ENCODE measurements at regions of chr6 and their contacts with region 1.

Region 1: DNA sequence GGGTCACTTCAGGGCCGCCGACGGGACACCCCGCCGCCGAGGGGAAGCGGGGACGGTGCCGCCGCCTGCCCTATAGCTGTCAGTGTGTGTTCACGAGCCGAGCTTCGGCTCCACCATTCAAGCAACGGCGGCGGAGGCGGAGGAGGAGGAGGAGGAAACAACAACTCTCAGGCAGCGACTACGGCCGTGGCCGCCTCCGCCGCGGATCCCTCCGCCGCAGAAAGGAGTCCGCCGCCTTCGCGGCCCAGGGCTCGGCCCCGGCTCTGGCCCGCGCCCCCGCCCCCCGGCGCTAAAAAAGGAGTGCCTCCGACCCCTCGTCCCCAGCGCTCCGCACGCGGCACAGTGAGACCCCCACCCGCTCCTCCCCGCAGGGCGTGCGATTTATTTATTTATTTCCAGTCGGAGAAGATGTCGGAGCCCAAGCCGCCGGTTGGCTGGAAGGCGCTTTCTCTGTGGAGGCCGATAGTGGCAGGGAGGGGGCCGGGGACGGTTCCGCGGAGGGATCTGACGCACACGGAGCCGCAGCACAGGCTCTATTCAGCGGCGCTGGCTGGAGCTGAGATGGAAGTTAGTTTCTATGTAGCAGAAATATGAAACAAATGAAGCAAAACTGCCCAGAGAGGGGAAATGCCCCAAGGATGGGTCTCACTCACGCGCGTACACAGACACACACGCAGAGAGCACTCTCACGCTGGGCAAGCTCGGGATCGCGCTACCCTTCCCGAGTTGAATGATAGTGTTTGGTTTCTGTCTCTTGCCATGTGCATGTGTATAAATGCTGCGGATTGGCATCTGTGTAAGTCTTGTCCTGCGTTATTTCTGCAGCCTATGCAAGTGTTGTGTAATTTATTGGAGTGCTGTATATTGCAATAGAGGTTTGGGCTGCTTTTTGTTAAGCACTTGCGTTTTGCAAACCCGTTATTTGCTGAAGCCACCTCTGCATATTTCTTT is at the start of gene PHIP:
- DNase-seq: peak; percentile 96
- H3K4me3 ChIP-seq: peak within 1 kb of the TSS; percentile 68 to 98 (median 86)
- H3K27ac ChIP-seq: peak within 1 kb of the TSS; percentile 80
- H3K4me1 ChIP-seq: peaks cover 10% of the 10 kb centered on the region
- H3K27me3 ChIP-seq: no peaks in the 10 kb centered on the region
- CTCF ChIP-seq: no peak
- total RNA-seq, gene PHIP: 17.2 to 18.0 TPM

Region 2: DNA sequence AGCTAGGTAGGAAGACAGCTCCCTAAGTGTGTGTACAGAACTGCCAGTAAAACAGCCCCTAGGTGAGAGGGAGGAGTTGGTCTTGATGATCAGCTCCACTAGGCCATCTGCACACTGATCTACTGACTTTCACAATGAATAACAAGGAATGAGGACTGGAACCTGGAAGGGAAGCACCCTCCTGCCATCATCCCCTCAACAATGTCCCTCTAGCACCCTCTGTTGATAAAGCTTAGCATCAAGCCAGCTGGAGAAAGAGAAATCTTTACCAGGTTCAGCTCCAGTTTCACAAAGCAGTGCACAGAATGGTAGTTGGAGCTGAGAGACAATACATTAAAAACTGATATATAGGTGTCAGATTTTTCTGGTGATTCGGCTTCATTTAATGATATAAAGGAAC is 268.2 kb before region 1 on chr6:
- CTCF ChIA-PET with region 1: no interaction called
- dilution Hi-C with region 1: no loop called
- in situ Hi-C with region 1: no loop called
- intact Hi-C with region 1: loop called (anchors 5 kb)
- DNase-seq: peak; percentile 77
- H3K4me3 ChIP-seq: no peak overlapping the region
- H3K27ac ChIP-seq: peak overlapping the region; percentile 85
- H3K4me1 ChIP-seq: peaks cover 23% of the 10 kb centered on the region
- H3K27me3 ChIP-seq: no peaks in the 10 kb centered on the region
- CTCF ChIP-seq: peak; percentile 76 to 80

Region 3: GRCh38 chr6:79158856-79159516 is 80.6 kb after region 1 on chr6:
- CTCF ChIA-PET with region 1: no interaction called
- dilution Hi-C with region 1: no loop called
- in situ Hi-C with region 1: no loop called
- intact Hi-C with region 1: no loop called
- DNase-seq: no peak
- H3K4me3 ChIP-seq: no peak overlapping the region
- H3K27ac ChIP-seq: no peak overlapping the region
- H3K4me1 ChIP-seq: no peaks in the 10 kb centered on the region
- H3K27me3 ChIP-seq: no peaks in the 10 kb centered on the region
- CTCF ChIP-seq: no peak

Region 4: DNA sequence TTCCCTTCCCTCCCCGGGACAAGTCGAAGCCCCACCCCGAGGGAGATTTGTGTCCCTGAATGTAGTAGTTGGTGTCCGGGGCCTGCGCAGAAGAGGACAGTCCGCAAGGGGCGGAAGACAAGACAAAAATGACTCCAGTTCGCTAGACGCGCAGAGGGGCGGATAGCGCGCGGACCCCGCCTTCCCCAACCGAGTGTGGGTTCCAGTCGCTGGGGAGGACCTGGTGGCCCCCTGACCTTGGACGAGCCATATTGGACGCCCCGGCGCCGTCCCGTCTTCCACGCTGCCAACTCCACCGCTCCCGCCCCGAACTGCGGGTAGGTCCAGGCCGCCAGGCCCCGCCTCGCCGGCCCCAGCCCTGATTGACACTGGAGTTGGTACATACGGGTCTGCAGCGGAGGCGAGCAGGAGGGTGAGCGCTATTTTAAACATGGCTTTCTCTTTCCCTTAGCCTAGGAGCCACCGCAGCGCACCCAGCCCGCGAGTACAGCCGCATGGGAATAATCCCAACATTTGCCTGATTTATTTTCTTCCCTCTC is 155.3 kb after region 1 on chr6:
- CTCF ChIA-PET with region 1: no interaction called
- dilution Hi-C with region 1: no loop called
- in situ Hi-C with region 1: no loop called
- intact Hi-C with region 1: loop called (anchors 1 kb)
- DNase-seq: peak; percentile 88
- H3K4me3 ChIP-seq: peak overlapping the region; percentile 74 to 85 (median 76)
- H3K27ac ChIP-seq: peak overlapping the region; percentile 70
- H3K4me1 ChIP-seq: peaks cover 3% of the 10 kb centered on the region
- H3K27me3 ChIP-seq: no peaks in the 10 kb centered on the region
- CTCF ChIP-seq: peak; percentile 30 to 42

Region 5: DNA sequence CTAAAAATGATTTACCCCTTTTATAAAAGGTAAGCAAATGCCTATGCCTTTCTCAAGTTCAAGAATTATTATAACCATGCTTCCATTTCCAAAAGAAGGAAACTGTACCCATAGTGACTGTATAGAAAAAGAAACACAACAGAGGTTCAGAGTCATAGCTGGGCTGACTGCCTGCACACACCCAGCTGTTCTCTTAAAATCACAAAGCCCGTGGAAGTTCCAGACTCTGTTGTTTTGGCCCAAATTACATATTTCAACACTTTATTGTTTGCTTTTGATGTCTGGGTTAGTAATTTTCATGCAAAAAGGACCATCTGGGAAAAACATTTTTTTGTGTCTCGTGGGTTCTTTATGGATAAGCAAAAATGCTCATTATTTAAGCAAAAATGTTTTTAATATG is 359.7 kb after region 1 on chr6:
- CTCF ChIA-PET with region 1: no interaction called
- dilution Hi-C with region 1: no loop called
- in situ Hi-C with region 1: no loop called
- intact Hi-C with region 1: no loop called
- DNase-seq: peak; percentile 19
- H3K4me3 ChIP-seq: no peak overlapping the region
- H3K27ac ChIP-seq: no peak overlapping the region
- H3K4me1 ChIP-seq: no peaks in the 10 kb centered on the region
- H3K27me3 ChIP-seq: no peaks in the 10 kb centered on the region
- CTCF ChIP-seq: no peak

Region 6: DNA sequence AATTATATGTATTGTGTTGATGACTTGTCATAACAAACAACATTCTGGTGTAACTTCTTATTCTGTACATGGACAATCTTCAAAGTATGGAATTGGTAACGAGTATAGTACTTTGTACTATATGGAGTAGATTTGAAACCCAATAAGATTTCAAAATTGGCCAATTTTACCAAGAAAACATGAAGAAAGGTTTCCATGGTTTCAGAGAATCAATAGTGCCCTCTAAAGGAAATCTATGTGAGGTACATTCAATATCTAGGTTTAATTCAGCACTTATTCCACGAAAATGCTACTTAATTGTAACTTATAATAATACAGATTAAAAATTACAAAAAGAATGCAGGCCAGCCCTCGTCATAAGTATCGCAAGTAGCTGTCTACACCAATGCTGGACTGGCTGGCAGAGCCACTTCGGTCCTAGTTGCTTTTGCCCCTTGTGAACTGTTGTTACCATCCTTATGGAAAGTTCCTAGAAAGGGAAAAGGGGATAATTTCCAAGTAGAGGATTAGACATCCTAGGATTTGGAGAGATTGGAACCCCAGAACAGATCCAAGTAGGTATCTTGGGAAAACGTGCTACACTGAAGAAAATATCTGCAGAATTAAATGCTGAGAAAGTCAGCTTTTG is 388.0 kb after region 1 on chr6:
- CTCF ChIA-PET with region 1: interaction called, 6 read pairs
- dilution Hi-C with region 1: no loop called
- in situ Hi-C with region 1: no loop called
- intact Hi-C with region 1: loop called (anchors 1 kb)
- DNase-seq: peak; percentile 19
- H3K4me3 ChIP-seq: no peak overlapping the region
- H3K27ac ChIP-seq: no peak overlapping the region
- H3K4me1 ChIP-seq: peaks cover 14% of the 10 kb centered on the region
- H3K27me3 ChIP-seq: no peaks in the 10 kb centered on the region
- CTCF ChIP-seq: peak; percentile 62 to 64

Region 7: DNA sequence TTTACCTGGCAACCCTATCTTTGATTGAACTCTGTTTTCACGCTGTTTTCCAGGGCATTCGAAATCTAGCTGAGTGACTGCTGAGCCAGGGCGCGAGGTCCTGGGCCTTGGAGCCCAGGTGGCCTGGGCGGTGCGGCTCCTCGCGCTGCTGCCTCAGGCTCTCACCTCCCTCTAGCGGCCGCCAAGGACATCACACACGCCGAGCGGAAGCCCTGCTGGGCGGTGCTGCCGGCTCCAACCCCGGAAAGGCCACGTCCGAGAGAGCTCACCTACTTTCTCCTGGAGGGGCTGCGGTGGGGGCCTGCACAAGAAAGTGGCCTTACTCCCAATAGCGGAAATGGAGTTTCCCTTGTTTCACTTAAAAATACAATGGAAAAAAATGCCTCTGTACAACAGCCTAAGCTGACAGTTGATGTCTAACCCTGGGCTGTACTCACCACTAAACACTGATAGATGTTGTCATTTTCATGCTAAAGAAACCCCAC is 791.3 kb after region 1 on chr6:
- CTCF ChIA-PET with region 1: no interaction called
- dilution Hi-C with region 1: no loop called
- in situ Hi-C with region 1: no loop called
- intact Hi-C with region 1: loop called (anchors 2 kb)
- DNase-seq: peak; percentile 64
- H3K4me3 ChIP-seq: no peak overlapping the region
- H3K27ac ChIP-seq: no peak overlapping the region
- H3K4me1 ChIP-seq: peaks cover 38% of the 10 kb centered on the region
- H3K27me3 ChIP-seq: no peaks in the 10 kb centered on the region
- CTCF ChIP-seq: peak; percentile 83 to 92

Measured in mammary epithelial cell (primary cell).